ENCODE measurements at regions of chr20 and their contacts with region 1.

Region 1: DNA sequence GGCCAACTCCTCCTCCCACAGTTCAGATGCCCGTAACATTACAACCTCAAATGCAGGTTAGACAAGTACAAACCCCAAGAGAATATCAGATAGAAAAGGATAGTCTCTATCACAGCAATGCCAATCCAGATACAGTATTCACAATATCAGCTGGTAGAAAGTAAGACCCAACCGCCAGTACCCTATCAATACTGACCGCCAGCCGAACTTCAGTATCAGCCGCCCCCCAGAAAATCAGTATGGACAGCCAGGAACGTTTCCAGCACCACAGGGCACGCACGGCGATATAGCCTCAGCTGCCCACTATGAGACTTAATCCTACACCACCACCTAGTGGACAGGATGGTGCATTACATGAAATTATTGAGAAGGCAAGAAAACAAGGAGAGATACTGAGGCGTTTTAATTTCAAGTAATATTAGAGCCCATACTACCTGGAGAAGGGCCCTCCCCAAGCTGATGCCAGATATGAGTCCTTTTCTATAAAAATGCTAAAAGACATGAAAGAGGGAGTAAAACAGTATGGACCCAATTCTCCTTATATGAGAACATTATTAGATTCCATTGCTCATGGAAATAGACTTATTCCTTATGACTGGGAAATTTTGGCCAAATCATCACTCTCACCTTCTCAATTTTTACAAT is 17.6 kb upstream of the EIF2S2 start:
- DNase-seq: peak; percentile 57 to 71 (median 69)
- H3K4me3 ChIP-seq: no peak overlapping the region
- H3K4me3 Mint-ChIP-seq: peak overlapping the region in 1 of 2 donors; percentile 39
- H3K27ac ChIP-seq: no peak overlapping the region
- H3K27ac Mint-ChIP-seq: no peak overlapping the region
- H3K4me1 ChIP-seq: peaks cover 0 to 5% of the 10 kb centered on the region in 2 donors
- H3K4me1 Mint-ChIP-seq: peaks cover 8% of the 10 kb centered on the region
- H3K27me3 ChIP-seq: no peaks in the 10 kb centered on the region
- H3K27me3 Mint-ChIP-seq: peaks cover 6 to 12% (median 11%) of the 10 kb centered on the region in 3 donors
- CTCF ChIP-seq: peak; percentile 85

Region 2: DNA sequence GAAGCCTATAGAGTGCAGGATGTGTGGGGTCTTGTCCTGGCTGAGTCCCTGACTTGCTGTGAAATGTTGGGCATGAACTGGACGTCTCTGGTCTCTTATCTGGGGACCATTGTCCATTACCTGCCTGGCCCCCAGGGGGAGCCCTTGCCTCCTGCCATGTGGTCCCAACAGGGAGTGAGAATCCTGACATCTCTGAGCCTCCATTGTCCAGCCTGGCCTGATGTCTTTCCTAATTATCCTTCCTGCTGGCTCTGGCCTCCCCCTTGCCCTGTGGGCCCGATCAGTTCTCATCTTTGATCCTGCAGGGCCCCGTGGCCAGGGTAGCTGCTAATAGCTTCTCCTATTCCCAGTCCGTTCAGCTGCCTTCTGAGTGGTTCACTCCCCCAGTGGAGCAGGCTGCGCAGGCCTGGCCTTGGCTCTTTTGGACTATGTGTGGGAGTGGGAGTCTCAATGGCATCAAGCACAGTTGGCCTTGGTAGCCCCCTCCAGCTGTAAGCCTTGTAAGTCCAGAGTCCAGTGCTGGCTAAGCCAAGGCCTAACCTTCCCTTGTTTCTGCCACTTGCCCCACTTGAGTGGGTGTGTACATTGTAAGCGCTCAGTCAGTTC is 213.8 kb before region 1 on chr20:
- intact Hi-C with region 1: loop called (anchors 10 kb)
- DNase-seq: peak; percentile 36 to 53 (median 49)
- H3K4me3 ChIP-seq: no peak overlapping the region
- H3K4me3 Mint-ChIP-seq: no peak overlapping the region
- H3K27ac ChIP-seq: no peak overlapping the region
- H3K27ac Mint-ChIP-seq: no peak overlapping the region
- H3K4me1 ChIP-seq: peaks cover 13% of the 10 kb centered on the region in 2 donors
- H3K4me1 Mint-ChIP-seq: peaks cover 33% of the 10 kb centered on the region
- H3K27me3 ChIP-seq: no peaks in the 10 kb centered on the region
- H3K27me3 Mint-ChIP-seq: peaks cover 3 to 9% (median 6%) of the 10 kb centered on the region in 3 donors
- CTCF ChIP-seq: peak; percentile 77

Measured in CD14-positive monocyte (primary cell).